ENCODE measurements at regions of chr1 and their contacts with region 1.

Region 1: DNA sequence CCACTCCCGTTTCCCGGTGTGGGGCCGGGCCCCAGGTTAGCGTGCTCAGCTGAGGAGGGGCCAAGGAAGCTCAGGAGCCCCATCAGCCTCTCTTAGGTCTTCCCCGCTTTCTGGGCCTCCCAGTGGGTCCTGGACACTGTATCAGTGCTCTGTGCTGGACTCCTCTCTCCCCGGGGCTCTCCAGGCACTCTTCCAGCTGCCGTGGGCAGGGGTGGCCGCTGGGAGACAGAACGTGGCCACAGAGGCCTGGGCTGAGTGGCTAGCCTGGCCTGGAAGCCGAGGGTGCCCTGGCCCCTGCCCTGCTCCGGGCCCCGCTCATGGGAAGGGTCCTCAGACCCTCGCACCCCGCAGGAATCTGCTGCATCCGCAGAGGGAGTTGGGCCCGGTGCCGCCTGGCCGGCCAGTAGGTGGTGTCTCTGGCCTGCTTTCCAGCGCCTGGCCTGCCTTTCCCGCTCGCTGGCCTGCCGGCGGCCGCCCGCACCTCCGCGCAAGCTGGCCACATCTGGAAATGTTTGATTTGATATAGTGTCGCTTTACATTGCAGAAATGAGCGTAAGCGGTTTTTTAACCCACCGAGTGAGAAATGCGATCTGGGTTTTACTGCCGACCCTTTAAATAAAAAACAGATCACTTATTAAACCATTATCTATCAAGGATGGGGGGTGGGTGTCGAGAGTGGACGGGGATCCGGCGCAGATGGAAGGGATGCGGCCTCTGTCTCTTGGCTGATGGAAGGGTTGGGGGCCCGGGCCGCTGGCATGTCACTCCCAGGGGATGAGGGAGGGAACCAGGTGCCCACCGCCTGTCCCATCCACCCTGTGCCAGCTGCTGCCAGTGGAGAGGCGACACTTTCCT is 74.4 kb upstream of the TTC34 start:
- DNase-seq: peak in 6 of 10 donors; percentile 30 to 75 (median 55)
- H3K4me3 ChIP-seq: no peak overlapping the region
- H3K27ac ChIP-seq: no peak overlapping the region
- H3K27me3 ChIP-seq: peaks cover 0 to 13% (median 0%) of the 10 kb centered on the region in 45 donors
- CTCF ChIP-seq: peak in 54 of 56 donors; percentile 43 to 88 (median 70)

Region 2: DNA sequence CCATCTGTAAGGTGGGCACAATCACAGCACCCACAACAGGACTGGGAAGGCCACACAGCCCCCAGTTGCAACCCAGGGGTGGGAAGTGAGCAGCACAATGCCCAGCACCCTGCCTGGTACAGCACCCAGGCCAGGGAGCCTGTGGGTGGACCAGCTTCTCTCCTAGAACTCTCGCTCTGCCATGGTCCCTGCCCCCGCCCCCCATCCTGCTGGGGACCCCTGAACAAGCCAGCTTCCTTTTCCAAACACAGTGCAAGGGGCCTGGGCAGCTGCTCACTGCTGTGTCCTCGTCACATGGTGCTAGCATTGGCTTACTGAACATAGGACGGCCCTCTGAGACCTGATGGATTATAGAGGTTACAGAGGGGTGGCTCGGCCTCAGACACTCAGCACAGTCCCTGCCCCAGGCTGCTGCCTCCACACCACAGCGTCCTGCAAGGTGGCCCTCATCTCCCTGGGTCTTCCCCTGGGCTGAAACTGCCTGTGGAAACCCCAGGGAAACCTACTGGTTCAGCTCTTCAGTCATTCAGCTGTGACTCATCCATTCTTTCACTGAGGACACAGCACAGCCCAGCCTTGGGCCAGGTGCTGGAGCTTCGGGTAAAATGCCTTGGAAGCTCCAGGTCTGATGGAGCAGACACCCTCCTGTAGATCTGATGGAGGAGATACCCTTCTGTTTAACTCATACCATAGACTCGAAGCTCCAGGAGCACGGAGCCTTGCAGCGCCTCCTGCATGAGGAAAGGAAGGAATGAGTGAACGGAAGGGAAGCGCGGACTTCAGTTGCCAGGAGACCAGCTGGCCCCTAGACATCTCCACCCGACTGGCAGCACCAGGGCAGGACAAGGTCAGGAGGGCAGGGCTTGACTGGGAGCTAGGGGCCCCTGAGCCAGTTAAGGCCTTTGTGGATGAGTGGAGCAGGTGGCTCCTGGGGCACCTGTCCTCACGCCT is 184.9 kb after region 1 on chr1:
- intact Hi-C with region 1: loop called in 1 of 2 experiments (anchors 5 kb)
- DNase-seq: peak in 5 of 10 donors; percentile 17 to 35 (median 27)
- H3K4me3 ChIP-seq: no peak overlapping the region
- H3K27ac ChIP-seq: no peak overlapping the region
- H3K27me3 ChIP-seq: peaks cover 0 to 39% (median 23%) of the 10 kb centered on the region in 45 donors
- CTCF ChIP-seq: no peak

Region 3: GRCh38 chr1:3283849-3284248 is 407.9 kb after region 1 on chr1:
- intact Hi-C with region 1: loop called (anchors 5 to 10 kb)
- DNase-seq: peak in 6 of 10 donors; percentile 36 to 72 (median 51)
- H3K4me3 ChIP-seq: no peak overlapping the region
- H3K27ac ChIP-seq: peak overlapping the region in 7 of 59 donors; percentile 1 to 41 (median 10)
- H3K27me3 ChIP-seq: peaks cover 0 to 44% (median 0%) of the 10 kb centered on the region in 45 donors
- CTCF ChIP-seq: peak; percentile 43 to 88 (median 77)

Region 4: GRCh38 chr1:3423245-3423829 is 547.4 kb after region 1 on chr1:
- intact Hi-C with region 1: loop called in 1 of 2 experiments (anchors 5 kb)
- DNase-seq: peak in 9 of 10 donors; percentile 47 to 79 (median 69)
- H3K4me3 ChIP-seq: no peak overlapping the region
- H3K27ac ChIP-seq: peak overlapping the region in 52 of 59 donors; percentile 19 to 85 (median 68)
- H3K27me3 ChIP-seq: no peaks in the 10 kb centered on the region
- CTCF ChIP-seq: peak in 2 of 56 donors; percentile 12 to 16